BJ (cell line): ENCODE measurements at regions of chr19 and their contacts with region 1.

Region 1: GRCh38 chr19:3125900-3126524 is 9.8 kb upstream of the GNA15 start:
- DNase-seq: no peak
- H3K4me3 ChIP-seq: no peak overlapping the region
- H3K27me3 ChIP-seq: no peaks in the 10 kb centered on the region
- CTCF ChIP-seq: peak; percentile 85

Region 2: DNA sequence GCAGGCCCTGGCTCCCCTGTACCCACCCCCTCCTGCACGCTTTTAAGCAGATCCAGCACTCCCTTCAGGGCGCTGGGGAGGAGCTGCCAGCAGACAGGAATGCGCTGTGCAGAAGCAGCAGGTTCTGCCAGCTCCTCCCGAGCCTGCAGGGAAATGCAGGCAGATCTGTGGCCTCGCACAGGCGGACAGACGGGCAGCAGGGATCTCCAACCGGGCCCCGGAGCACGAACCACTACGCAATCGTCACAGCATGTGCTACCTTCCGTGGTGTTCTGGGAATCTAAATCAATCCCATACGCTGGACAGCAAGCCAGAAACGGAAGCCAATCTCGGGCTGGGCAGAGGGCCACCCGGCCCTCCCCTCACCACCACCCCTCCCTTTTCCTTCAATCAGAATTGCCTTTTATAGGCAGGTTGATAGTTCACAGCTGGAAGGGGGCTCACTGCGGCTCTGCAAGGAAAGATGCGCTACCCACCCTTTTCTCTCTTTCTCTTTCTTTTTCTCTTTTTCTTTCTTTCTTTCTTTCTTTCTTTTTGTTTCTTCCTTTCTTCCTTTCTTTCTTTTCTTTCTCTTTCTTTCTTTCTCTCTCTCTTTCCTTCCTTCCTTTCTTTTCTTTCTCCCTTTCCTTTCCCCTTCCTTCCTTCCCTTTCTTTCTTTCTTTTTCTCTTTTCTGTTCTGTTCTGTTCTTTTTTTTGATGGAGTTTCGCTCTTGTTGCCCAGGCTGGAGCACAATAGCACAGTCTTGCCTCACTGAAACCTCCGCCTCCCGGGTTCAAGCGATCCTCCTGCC is 523.4 kb before region 1 on chr19:
- CTCF ChIA-PET with region 1: no interaction called
- POLR2A ChIA-PET with region 1: interaction called, 10 read pairs
- DNase-seq: peak; percentile 97
- H3K4me3 ChIP-seq: peak overlapping the region; percentile 27
- H3K27me3 ChIP-seq: no peaks in the 10 kb centered on the region
- CTCF ChIP-seq: peak; percentile 27; the same call in 1 of the 2 replicates

Region 3: DNA sequence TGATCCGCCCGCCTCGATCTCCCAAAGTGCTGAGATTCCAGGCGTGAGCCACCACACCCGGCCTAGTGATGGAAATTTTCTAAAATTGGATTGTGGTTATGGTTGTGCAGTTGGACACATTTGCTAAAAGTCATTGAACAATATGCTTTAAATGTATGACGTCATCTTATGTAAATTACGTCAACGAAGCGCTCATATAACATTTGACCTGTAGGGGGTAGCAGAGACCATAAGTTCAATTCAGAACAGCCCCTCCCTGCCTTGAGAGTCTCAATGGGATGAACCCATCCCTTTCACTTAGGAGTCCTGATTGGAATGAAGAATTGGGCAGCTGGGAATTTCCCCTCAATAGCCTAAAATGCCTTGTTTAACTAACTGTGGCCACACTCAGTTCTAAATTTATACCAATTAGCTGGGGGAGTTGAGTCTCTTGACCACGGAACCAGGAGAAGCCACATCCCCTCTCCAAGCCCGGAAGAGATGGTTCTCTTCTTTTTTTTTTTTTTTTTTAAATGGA is 163.9 kb before region 1 on chr19:
- CTCF ChIA-PET with region 1: interaction called, 10 read pairs
- POLR2A ChIA-PET with region 1: no interaction called
- DNase-seq: peak; percentile 37
- H3K4me3 ChIP-seq: no peak overlapping the region
- H3K27me3 ChIP-seq: no peaks in the 10 kb centered on the region
- CTCF ChIP-seq: peak; percentile 60

Region 4: DNA sequence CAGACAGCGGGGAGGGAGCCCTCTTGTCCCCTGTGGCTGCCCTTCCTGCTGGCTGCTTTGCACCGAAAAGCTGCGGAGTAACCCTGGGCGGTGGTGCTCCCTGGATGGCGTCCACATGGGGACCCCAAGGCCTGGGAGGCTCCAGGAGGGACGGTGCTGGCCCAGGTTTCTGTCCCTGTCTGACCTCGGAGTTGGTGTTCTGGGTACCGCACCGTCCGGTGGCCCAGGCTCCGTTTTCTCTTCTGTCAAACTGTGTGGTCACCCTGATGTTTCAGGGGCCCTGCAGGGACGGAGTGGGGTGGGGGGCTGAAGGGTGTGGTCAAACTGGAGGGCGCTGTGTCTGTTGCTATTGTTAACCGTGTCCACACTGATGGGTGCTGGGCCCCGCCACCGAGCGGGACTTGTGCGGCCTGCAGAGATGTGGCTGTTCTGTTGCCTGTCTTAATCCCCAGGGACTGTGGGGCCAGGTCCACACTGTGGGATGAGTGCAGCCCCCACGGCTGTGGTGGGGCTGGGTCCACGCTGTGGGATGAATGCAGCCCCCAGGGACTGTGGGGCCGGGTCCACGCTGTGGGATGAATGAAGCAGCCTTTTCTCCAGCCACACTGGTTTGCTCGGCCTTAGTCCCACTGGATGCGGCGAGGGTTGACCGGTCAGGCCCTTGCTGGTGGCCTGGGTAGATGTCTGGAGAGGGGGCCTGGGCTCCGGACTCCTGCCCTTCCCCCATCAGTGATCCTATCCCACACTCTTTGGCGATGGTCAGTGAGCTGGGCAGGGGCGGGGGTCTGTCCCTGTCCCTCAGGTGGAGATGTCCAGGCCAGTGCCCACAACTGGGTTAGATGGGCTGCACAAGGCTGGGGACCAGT is 24.9 kb before region 1 on chr19:
- CTCF ChIA-PET with region 1: interaction called, 13 read pairs
- POLR2A ChIA-PET with region 1: no interaction called
- DNase-seq: no peak
- H3K4me3 ChIP-seq: no peak overlapping the region
- H3K27me3 ChIP-seq: no peaks in the 10 kb centered on the region
- CTCF ChIP-seq: no peak

Region 5: DNA sequence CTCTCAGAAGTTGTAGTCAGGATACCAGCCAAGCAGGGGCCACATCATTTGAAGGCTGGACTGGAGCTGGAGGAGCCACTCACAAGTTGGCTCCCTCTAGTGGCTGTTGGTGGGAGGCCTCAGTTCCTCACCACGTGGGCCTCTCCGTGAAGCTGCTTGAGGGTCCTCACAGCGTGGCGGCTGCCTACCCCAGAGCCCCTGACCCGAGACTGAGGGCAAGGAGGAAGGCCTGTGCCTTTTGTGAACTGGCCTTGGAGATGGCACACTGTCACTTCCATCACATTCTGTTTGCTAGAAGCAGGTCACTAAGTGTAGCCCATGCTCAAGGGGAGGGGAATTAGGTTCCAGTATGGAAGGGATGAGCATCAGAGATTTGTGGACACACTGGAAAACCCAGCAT is 17.2 kb before region 1 on chr19:
- CTCF ChIA-PET with region 1: interaction called, 13 read pairs
- POLR2A ChIA-PET with region 1: no interaction called
- DNase-seq: no peak
- H3K4me3 ChIP-seq: no peak overlapping the region
- H3K27me3 ChIP-seq: no peaks in the 10 kb centered on the region
- CTCF ChIP-seq: peak; percentile 93

Region 6: DNA sequence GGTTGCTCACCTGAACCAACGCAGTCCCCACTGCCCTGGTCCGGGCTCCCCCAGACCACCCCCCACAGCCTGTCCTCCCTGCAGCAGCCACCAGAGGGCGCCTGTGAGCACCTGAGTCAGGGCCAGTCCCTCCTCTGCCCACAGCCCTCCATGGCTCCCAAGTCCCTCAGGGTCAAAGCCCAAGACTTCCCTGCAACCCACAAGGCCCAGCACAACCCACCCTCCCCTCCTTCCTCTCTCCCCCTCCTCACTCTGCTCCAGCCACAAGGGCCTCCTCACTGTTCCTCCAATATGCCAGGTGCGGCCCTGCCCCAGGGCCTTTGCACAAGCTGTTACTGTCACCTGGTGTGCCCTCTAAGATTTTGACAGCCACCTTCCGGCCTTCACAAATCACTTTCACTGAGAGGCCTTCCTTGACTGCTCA is 20.7 kb after region 1 on chr19:
- CTCF ChIA-PET with region 1: interaction called, 29 read pairs
- POLR2A ChIA-PET with region 1: no interaction called
- DNase-seq: no peak
- H3K4me3 ChIP-seq: no peak overlapping the region
- H3K27me3 ChIP-seq: no peaks in the 10 kb centered on the region
- CTCF ChIP-seq: peak; percentile 83

Region 7: GRCh38 chr19:3163230-3163886 is 37.3 kb after region 1 on chr19:
- CTCF ChIA-PET with region 1: interaction called, 103 read pairs
- POLR2A ChIA-PET with region 1: no interaction called
- DNase-seq: no peak
- H3K4me3 ChIP-seq: no peak overlapping the region
- H3K27me3 ChIP-seq: no peaks in the 10 kb centered on the region
- CTCF ChIP-seq: peak; percentile 96